PC-3 (cell line): ENCODE measurements at regions of chr1 and their contacts with region 1.

Region 1: DNA sequence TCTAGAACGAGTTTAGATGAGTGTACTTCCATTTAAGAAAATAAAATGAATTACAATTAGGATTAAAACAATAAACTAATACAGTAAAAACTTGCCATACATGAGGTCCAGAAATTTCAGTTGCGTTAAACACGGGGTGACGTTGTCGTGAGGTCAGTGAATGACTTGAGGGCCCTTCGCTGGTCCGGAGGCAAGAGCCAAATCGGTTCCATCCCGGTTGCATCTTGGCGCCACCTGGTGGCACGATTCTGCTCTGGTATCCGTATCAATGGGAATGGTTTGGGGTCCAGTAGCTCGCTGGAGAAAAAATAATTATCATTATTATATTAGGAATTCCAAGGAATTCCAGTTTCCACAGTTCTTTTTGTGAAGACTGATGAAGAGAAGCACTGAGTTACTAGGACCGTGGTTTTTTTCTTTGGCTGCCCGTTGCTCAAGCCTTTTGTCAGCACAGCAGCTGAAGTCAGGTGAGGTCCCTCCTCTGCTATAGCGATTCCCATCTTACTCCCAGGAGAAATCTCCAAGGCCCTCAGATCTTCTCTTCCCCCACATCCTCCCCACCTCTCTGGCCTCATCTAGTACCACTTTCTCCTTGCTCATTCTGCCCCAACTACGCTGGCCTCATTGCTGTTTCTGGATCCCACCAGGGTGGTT is 161.4 kb downstream of the SLC35F3 start:
- DNase-seq: peak; percentile 95
- ATAC-seq: peak; percentile 48
- H3K4me3 ChIP-seq: no peak overlapping the region
- H3K27ac ChIP-seq: peak overlapping the region; percentile 53
- H3K4me1 ChIP-seq: peaks cover 43% of the 10 kb centered on the region
- H3K27me3 ChIP-seq: no peaks in the 10 kb centered on the region
- CTCF ChIP-seq: peak; percentile 95

Region 2: GRCh38 chr1:233304489-233305102 is 761.3 kb before region 1 on chr1:
- CTCF ChIA-PET with region 1: no interaction called
- POLR2A ChIA-PET with region 1: interaction called, 3 read pairs
- intact Hi-C with region 1: loop called (anchors 5 kb)
- DNase-seq: peak; percentile 74
- ATAC-seq: peak; percentile 71
- H3K4me3 ChIP-seq: no peak overlapping the region
- H3K27ac ChIP-seq: no peak overlapping the region
- H3K4me1 ChIP-seq: peaks cover 1% of the 10 kb centered on the region; the same call in 1 of the 2 replicates
- H3K27me3 ChIP-seq: no peaks in the 10 kb centered on the region
- CTCF ChIP-seq: peak; percentile 93

Region 3: GRCh38 chr1:233364695-233365539 is 701.0 kb before region 1 on chr1:
- CTCF ChIA-PET with region 1: no interaction called
- POLR2A ChIA-PET with region 1: no interaction called
- intact Hi-C with region 1: no loop called
- DNase-seq: peak; percentile 65
- ATAC-seq: peak; percentile 31; the same call in 1 of the 2 replicates
- H3K4me3 ChIP-seq: no peak overlapping the region
- H3K27ac ChIP-seq: no peak overlapping the region
- H3K4me1 ChIP-seq: peaks cover 23% of the 10 kb centered on the region
- H3K27me3 ChIP-seq: no peaks in the 10 kb centered on the region
- CTCF ChIP-seq: peak; percentile 87

Region 4: GRCh38 chr1:233477359-233477758 is 588.6 kb before region 1 on chr1:
- CTCF ChIA-PET with region 1: no interaction called
- POLR2A ChIA-PET with region 1: no interaction called
- intact Hi-C with region 1: loop called (anchors 5 kb)
- DNase-seq: peak; percentile 41
- ATAC-seq: no peak
- H3K4me3 ChIP-seq: no peak overlapping the region
- H3K27ac ChIP-seq: no peak overlapping the region
- H3K4me1 ChIP-seq: peaks cover 18% of the 10 kb centered on the region
- H3K27me3 ChIP-seq: no peaks in the 10 kb centered on the region
- CTCF ChIP-seq: 0 out of 2 replicates have a peak, but pooled peaks have one; percentile 33

Region 5: GRCh38 chr1:233790662-233791375 is 275.1 kb before region 1 on chr1:
- CTCF ChIA-PET with region 1: interaction called, 3 read pairs
- POLR2A ChIA-PET with region 1: no interaction called
- intact Hi-C with region 1: loop called (anchors 1 kb)
- DNase-seq: peak; percentile 87
- ATAC-seq: peak; percentile 87
- H3K4me3 ChIP-seq: no peak overlapping the region
- H3K27ac ChIP-seq: no peak overlapping the region
- H3K4me1 ChIP-seq: peaks cover 12% of the 10 kb centered on the region
- H3K27me3 ChIP-seq: no peaks in the 10 kb centered on the region
- CTCF ChIP-seq: peak; percentile 98

Region 6: DNA sequence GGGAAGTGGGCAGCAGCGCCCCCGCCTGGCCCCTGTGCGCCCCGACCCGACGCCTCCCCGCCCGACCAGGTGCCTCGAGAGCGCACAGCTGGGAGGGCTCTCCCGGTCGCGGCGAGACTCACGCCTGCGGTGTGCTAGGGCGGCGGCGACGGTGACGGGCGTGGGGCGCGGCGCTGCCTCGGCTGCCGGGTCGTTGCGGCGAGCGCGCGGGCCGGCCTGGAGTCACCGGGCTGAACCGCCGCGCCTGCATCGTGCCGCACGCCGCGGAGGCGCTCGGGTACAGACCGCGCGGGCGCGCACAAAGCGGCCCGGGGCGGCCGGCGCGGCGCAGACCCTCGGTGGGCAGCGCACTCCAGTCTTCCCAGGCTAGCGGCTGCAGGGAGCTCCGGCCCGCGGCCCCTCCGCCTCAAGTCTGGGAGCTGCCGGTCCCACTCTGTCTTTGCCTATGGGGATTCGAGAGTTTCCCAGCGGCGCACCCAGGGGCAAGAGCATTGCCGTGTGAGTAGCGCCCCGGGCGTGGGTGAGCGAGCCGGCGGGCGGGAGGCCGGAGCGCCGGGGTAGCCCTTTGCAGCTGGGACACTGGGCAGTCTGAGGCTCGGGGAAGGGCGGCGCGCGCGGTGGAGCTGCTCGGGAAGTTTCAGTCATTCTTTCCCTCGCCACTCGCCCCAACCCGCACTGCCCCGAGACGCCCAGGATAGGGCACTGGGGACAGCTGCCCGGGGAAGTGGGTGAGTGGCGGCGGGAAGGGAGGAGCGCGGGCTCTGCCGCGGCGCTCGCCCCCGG is 161.1 kb before region 1 on chr1 and contains the start of gene SLC35F3:
- CTCF ChIA-PET with region 1: interaction called, 4 read pairs
- POLR2A ChIA-PET with region 1: no interaction called
- intact Hi-C with region 1: loop called (anchors 1 kb)
- DNase-seq: peak; percentile 93
- ATAC-seq: peak; percentile 78
- H3K4me3 ChIP-seq: peak within 1 kb of the TSS; percentile 72
- H3K27ac ChIP-seq: peak within 1 kb of the TSS; percentile 85
- H3K4me1 ChIP-seq: peaks cover 39% of the 10 kb centered on the region
- H3K27me3 ChIP-seq: no peaks in the 10 kb centered on the region
- CTCF ChIP-seq: peak; percentile 72
- total RNA-seq, gene SLC35F3: 17.7 and 19.3 TPM in 2 replicates

Region 7: DNA sequence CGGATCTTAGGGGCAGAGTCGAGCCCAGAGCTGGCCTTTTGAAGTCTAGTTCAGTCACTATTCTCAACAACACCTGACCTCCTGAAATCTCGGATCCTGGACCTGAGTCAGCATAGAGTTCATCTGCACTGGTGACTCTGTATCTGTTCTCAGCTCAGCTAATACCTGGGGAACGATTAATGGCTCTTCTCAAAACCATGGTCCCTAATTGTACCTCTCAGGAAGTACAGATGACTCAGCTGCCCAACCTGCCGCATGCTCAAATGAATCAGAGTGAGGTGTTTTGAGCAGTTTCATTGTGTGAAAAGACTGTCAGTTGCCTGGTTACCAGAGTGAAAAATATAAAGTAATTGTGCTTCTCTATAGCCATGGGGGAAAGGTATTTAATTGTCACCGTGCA is 72.3 kb before region 1 on chr1:
- CTCF ChIA-PET with region 1: interaction called, 3 read pairs
- POLR2A ChIA-PET with region 1: no interaction called
- intact Hi-C with region 1: loop called (anchors 2 kb)
- DNase-seq: peak; percentile 99
- ATAC-seq: peak; percentile 85
- H3K4me3 ChIP-seq: no peak overlapping the region
- H3K27ac ChIP-seq: peak overlapping the region; percentile 97
- H3K4me1 ChIP-seq: peaks cover 62% of the 10 kb centered on the region
- H3K27me3 ChIP-seq: no peaks in the 10 kb centered on the region
- CTCF ChIP-seq: no peak

Region 8: DNA sequence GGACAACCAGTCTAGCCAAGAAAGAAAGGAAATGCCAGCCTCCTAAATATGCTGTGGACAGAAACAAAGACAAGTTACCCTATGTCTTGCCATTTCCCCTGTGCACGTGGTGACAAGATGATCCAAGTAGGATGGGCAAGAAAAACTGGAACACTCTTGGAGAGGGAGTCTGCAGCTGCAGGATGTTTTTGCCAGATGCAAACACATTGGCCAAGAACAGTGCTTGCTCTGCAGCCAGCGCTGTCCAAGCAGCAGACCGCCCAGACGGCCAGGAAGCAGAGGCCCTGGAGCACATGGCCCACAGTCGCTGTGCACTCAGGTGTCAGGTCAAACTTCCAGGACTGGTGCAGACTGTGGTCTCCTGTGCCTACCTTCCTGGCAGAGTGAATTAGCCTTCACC is 27.8 kb after region 1 on chr1:
- CTCF ChIA-PET with region 1: no interaction called
- POLR2A ChIA-PET with region 1: no interaction called
- intact Hi-C with region 1: no loop called
- DNase-seq: no peak
- ATAC-seq: no peak
- H3K4me3 ChIP-seq: no peak overlapping the region
- H3K27ac ChIP-seq: no peak overlapping the region
- H3K4me1 ChIP-seq: no peaks in the 10 kb centered on the region
- H3K27me3 ChIP-seq: no peaks in the 10 kb centered on the region
- CTCF ChIP-seq: no peak

Region 9: DNA sequence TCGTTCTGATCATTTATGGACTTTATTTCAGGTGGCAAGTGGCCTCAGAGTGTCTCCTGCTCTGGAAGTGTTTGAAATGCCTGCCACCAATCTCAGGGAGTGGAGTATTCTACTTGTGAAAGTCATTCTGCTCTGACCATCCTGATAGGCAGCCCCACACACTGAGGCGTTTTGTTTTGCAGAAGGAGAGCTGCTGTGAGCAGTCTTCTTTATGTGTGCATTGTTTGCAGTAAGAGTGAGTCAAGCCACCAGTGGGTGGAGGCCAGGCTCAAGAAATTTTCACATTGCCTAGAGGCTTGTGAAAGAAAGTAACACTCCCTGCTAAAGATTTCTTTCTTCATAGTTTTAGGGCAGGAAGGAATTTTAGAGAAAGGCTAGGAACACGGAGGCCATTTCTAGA is 43.0 kb after region 1 on chr1:
- CTCF ChIA-PET with region 1: no interaction called
- POLR2A ChIA-PET with region 1: no interaction called
- intact Hi-C with region 1: loop called (anchors 1 kb)
- DNase-seq: peak; percentile 93
- ATAC-seq: peak; percentile 93
- H3K4me3 ChIP-seq: no peak overlapping the region
- H3K27ac ChIP-seq: peak overlapping the region; percentile 86
- H3K4me1 ChIP-seq: peaks cover 26% of the 10 kb centered on the region
- H3K27me3 ChIP-seq: no peaks in the 10 kb centered on the region
- CTCF ChIP-seq: no peak

Region 10: DNA sequence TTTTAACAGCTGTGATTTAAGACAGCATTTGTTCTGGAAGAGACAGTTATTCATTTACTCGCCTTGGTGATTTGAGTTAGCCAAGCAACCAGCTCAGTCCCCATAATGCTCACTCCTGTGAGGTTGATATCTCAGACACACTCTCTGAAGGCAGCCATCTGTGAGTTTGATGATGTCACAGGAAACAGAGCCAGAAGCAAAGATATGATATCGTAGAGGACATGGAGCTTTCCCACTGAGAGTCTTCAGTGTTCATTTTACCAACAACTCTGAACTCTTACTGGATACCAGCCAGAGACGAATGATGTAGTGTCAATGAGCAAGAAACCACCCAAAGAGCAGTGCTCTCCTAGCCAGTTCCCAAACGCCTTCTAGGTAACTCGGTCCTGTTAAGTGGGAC is 57.9 kb after region 1 on chr1:
- CTCF ChIA-PET with region 1: no interaction called
- POLR2A ChIA-PET with region 1: no interaction called
- intact Hi-C with region 1: no loop called
- DNase-seq: no peak
- ATAC-seq: no peak
- H3K4me3 ChIP-seq: no peak overlapping the region
- H3K27ac ChIP-seq: no peak overlapping the region
- H3K4me1 ChIP-seq: no peaks in the 10 kb centered on the region
- H3K27me3 ChIP-seq: no peaks in the 10 kb centered on the region
- CTCF ChIP-seq: no peak

Region 11: GRCh38 chr1:234206651-234207284 is 140.8 kb after region 1 on chr1:
- CTCF ChIA-PET with region 1: no interaction called
- POLR2A ChIA-PET with region 1: no interaction called
- intact Hi-C with region 1: no loop called
- DNase-seq: peak; percentile 99
- ATAC-seq: peak; percentile 98
- H3K4me3 ChIP-seq: no peak overlapping the region
- H3K27ac ChIP-seq: peak overlapping the region; percentile 35
- H3K4me1 ChIP-seq: peaks cover 22% of the 10 kb centered on the region
- H3K27me3 ChIP-seq: no peaks in the 10 kb centered on the region
- CTCF ChIP-seq: no peak